HepG2 (cell line): ENCODE measurements at regions of chr6 and their contacts with region 1.

Region 1: GRCh38 chr6:146905181-146905704 is 299.0 kb upstream of the STXBP5 start:
- DNase-seq: peak; percentile 15
- ATAC-seq: no peak
- H3K4me3 ChIP-seq: no peak overlapping the region
- H3K27ac ChIP-seq: no peak overlapping the region
- H3K4me1 ChIP-seq: peaks cover 9% of the 10 kb centered on the region; the same call in 1 of the 2 replicates
- H3K27me3 ChIP-seq: no peaks in the 10 kb centered on the region
- CTCF ChIP-seq: no peak
- EP300 ChIP-seq: no peak
- POLR2A ChIP-seq: no peak
- RAD21 ChIP-seq: no peak

Region 2: GRCh38 chr6:147192302-147192771 is 287.1 kb after region 1 on chr6:
- CTCF ChIA-PET with region 1: no interaction called
- POLR2A ChIA-PET with region 1: no interaction called
- in situ Hi-C with region 1: no loop called
- intact Hi-C with region 1: no loop called
- DNase-seq: peak; percentile 76
- ATAC-seq: peak; percentile 88
- H3K4me3 ChIP-seq: no peak overlapping the region
- H3K27ac ChIP-seq: no peak overlapping the region
- H3K4me1 ChIP-seq: peaks cover 20% of the 10 kb centered on the region
- H3K27me3 ChIP-seq: peaks cover 0 to 4% of the 10 kb centered on the region in 2 experiments; a peak in 1 of 5 replicates
- CTCF ChIP-seq: no peak
- EP300 ChIP-seq: peak; percentile 76 to 93; a peak in 3 of 4 replicates
- POLR2A ChIP-seq: no peak
- RAD21 ChIP-seq: no peak

Region 3: DNA sequence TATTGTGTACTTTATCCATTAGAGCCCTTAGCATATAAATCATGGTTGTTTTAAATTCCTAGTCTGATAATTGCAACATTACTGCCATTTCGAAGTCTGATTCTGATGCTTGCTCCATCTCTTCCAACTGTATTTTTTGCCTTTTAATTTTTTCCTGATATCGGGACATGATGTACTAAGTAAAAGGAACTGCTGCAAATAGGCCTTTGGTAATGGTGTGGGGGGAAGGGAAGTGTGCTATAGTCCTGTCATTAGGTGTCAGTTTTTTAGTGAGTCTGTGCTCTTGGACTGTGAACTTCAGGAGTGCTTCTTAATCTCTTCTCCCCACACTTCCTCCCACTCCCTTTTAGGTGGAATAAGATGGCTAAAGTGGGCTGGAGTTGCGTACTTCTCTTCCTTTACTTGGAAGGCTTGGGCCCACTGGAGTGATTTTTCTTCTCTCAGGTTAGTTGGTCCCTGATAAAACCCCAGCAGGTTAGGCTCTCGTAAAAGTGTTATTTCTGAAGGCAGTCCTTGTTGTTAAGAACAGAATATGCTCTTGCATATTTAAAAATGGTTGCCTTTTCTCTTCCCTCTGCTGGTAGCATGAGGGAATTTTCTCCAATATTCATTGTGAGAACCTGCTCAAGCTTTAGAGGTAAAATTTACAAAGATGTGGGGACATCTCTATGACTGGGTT is 317.1 kb after region 1 on chr6:
- CTCF ChIA-PET with region 1: interaction called, 10 read pairs
- POLR2A ChIA-PET with region 1: no interaction called
- in situ Hi-C with region 1: no loop called
- intact Hi-C with region 1: loop called (anchors 1 kb)
- DNase-seq: peak; percentile 30
- ATAC-seq: peak; percentile 81
- H3K4me3 ChIP-seq: no peak overlapping the region
- H3K27ac ChIP-seq: no peak overlapping the region
- H3K4me1 ChIP-seq: no peaks in the 10 kb centered on the region
- H3K27me3 ChIP-seq: no peaks in the 10 kb centered on the region
- CTCF ChIP-seq: peak; percentile 27; the same call in 1 of the 2 replicates
- EP300 ChIP-seq: no peak
- POLR2A ChIP-seq: no peak
- RAD21 ChIP-seq: peak; percentile 25; the same call in 1 of the 2 replicates

Region 4: DNA sequence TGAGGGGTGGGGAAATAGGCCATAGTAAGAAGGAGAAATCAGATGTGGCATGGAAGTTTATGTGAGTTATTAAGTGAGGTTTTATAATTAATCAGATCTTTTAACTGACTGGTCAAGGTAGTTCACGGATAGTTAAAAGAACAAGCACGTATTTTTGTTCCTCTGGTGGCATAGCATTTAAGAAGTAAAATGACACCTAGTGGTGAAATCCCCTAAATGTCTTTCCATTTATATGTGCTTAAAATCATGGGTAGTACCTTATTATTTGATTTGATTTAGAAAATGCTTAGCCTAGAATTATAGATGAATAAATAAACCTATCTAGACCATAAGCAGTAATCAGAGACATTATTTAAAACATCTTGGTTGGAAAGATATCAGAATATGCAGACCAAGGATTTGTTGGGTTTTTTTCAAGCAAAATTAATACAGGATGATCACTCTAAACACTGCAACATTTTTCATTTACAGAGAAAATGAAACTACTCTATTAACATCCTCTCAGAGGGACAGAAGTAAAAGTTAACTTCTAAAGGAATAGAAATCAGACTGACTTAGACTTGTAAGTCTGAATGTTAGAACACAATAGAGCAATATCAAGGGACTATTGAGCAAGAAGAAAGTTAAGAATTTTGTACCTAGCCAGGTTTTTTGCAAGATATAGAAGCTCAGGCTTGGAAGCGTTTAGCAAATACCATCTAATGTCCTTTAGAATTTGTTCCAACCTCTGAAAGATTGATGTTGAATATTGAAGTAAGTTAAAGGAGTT is 380.0 kb after region 1 on chr6:
- CTCF ChIA-PET with region 1: interaction called, 7 read pairs
- POLR2A ChIA-PET with region 1: no interaction called
- in situ Hi-C with region 1: no loop called
- intact Hi-C with region 1: loop called (anchors 1 kb)
- DNase-seq: peak; percentile 46
- ATAC-seq: peak; percentile 65; the same call in 2 of the 3 replicates
- H3K4me3 ChIP-seq: no peak overlapping the region
- H3K27ac ChIP-seq: no peak overlapping the region
- H3K4me1 ChIP-seq: no peaks in the 10 kb centered on the region
- H3K27me3 ChIP-seq: no peaks in the 10 kb centered on the region
- CTCF ChIP-seq: peak; percentile 50
- EP300 ChIP-seq: no peak
- POLR2A ChIP-seq: no peak
- RAD21 ChIP-seq: no peak